ENCODE measurements at regions of chr7 and their contacts with region 1.

Region 1: DNA sequence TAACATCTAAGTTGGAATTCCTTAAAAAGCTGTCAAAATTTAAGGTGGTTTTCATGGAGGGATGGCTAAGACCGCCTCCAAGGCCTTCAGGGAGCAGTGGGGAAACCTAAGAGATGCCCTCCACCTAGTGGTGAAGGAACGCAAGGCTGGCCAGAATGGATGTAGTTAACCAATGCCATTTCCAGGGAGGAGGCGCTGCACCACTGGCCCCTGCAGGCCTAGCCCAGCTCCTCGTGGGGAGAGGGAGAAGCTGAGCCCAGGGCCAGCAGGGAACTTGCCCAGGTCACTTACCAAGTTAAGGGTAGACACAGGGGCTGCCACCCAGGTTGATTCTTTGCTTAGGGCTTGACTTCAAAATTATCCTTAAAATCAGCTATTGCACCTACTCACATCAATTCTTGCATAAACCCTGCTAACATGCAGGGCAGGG is 32.0 kb downstream of the FIGNL1 start:
- DNase-seq: peak; percentile 90
- H3K4me3 ChIP-seq: no peak overlapping the region
- H3K27ac ChIP-seq: peak overlapping the region in 1 of 8 donors; percentile 67
- H3K4me1 ChIP-seq: peaks cover 28 to 55% (median 44%) of the 10 kb centered on the region in 6 donors
- H3K27me3 ChIP-seq: no peaks in the 10 kb centered on the region
- CTCF ChIP-seq: peak; percentile 67 to 93 (median 87)
- POLR2A ChIP-seq: no peak

Region 2: GRCh38 chr7:50142425-50143017 is 275.6 kb before region 1 on chr7:
- intact Hi-C with region 1: loop called (anchors 5 kb)
- DNase-seq: no peak
- H3K4me3 ChIP-seq: peak overlapping the region in 1 of 8 donors; percentile 32
- H3K27ac ChIP-seq: peak overlapping the region in 3 of 8 donors; percentile 8 to 41 (median 27)
- H3K4me1 ChIP-seq: peaks cover 0 to 33% (median 15%) of the 10 kb centered on the region in 6 donors
- H3K27me3 ChIP-seq: no peaks in the 10 kb centered on the region
- CTCF ChIP-seq: peak; percentile 45 to 74 (median 65)
- POLR2A ChIP-seq: no peak

Region 3: GRCh38 chr7:50204581-50204980 is 213.5 kb before region 1 on chr7:
- intact Hi-C with region 1: loop called (anchors 5 kb)
- DNase-seq: no peak
- H3K4me3 ChIP-seq: no peak overlapping the region
- H3K27ac ChIP-seq: no peak overlapping the region
- H3K4me1 ChIP-seq: peaks cover 3 to 62% (median 41%) of the 10 kb centered on the region in 6 donors
- H3K27me3 ChIP-seq: no peaks in the 10 kb centered on the region
- CTCF ChIP-seq: no peak
- POLR2A ChIP-seq: no peak